GM12878 (cell line): ENCODE measurements at regions of chr17 and their contacts with region 1.

Region 1: GRCh38 chr17:58382108-58382871 is 30.3 kb upstream of the SUPT4H1 start:
- DNase-seq: peak; percentile 44
- ATAC-seq: peak; percentile 90
- H3K4me3 ChIP-seq: no peak overlapping the region; the same call in 1 of the 2 replicates
- H3K27ac ChIP-seq: peak overlapping the region; percentile 42; the same call in 1 of the 2 replicates
- H3K4me1 ChIP-seq: peaks cover 19% of the 10 kb centered on the region
- H3K27me3 ChIP-seq: no peaks in the 10 kb centered on the region
- CTCF ChIP-seq: no peak
- EP300 ChIP-seq: no peak
- POLR2A ChIP-seq: no peak
- RAD21 ChIP-seq: no peak

Region 2: GRCh38 chr17:58289869-58290268 is 92.4 kb before region 1 on chr17:
- CTCF ChIA-PET with region 1: no interaction called
- POLR2A ChIA-PET with region 1: no interaction called
- RAD21 ChIA-PET with region 1: no interaction called
- SMC1A ChIA-PET with region 1: no interaction called
- in situ Hi-C with region 1: no loop called
- intact Hi-C with region 1: no loop called
- DNase-seq: no peak
- ATAC-seq: no peak
- H3K4me3 ChIP-seq: no peak overlapping the region
- H3K27ac ChIP-seq: no peak overlapping the region
- H3K4me1 ChIP-seq: no peaks in the 10 kb centered on the region
- H3K27me3 ChIP-seq: no peaks in the 10 kb centered on the region
- CTCF ChIP-seq: no peak
- EP300 ChIP-seq: no peak
- POLR2A ChIP-seq: no peak
- RAD21 ChIP-seq: no peak

Region 3: DNA sequence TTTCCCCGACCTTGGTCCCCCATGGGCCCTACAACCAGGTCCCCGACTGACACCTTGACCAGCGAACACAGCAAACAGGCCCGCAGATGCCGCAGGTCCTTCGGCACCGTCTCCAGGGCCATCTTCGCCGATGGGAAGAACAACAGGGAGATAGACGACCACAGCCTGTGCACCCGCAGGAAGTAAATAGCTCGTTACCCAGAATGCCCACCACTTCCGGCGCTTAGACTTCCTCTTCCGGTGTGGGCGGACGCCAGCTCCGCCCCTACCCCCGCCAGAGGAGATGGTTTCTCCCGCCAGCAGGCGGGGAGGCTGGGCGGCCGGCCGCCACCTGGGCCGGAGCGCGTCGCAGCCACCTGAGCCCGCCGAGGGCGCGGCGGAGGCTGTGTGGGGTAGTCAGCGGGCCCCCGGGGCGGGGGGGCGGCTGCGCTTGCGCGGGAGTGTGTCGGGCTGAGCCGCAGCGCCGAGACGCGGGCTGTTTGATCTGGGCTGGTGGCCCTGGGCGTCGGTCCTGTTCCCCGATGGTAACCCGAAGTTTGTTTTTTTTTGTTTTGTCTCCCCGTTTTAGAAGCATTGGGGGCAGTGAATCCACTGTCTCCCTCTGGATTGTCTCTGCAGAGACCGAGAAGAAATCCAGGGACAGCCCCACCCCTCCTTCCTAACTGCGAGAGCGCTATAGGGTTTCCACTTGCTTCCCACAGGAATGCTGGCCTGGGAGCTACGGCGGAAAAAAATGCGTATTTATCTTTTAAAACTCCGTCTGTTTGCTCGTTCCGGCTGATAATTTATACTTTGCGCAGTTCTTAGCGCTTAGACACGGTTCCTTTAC is 30.1 kb before region 1 on chr17 and contains the start of gene SUPT4H1:
- CTCF ChIA-PET with region 1: interaction called, 6 read pairs
- POLR2A ChIA-PET with region 1: interaction called, 29 read pairs
- RAD21 ChIA-PET with region 1: interaction called, 4 read pairs
- SMC1A ChIA-PET with region 1: interaction called, 6 read pairs
- in situ Hi-C with region 1: no loop called
- intact Hi-C with region 1: no loop called
- DNase-seq: peak; percentile 73
- ATAC-seq: peak; percentile 96
- H3K4me3 ChIP-seq: peak within 1 kb of the TSS; percentile 94
- H3K27ac ChIP-seq: peak within 1 kb of the TSS; percentile 93
- H3K4me1 ChIP-seq: peaks cover 10% of the 10 kb centered on the region
- H3K27me3 ChIP-seq: no peaks in the 10 kb centered on the region
- CTCF ChIP-seq: no peak; a peak in 1 of 6 replicates
- EP300 ChIP-seq: peak in 1 of 2 experiments; percentile 43; a peak in 2 of 4 replicates
- POLR2A ChIP-seq: peak; percentile 91
- RAD21 ChIP-seq: peak; percentile 35; the same call in 1 of the 2 replicates
- polyA plus RNA-seq, gene SUPT4H1: 148 to 293 TPM

Region 4: DNA sequence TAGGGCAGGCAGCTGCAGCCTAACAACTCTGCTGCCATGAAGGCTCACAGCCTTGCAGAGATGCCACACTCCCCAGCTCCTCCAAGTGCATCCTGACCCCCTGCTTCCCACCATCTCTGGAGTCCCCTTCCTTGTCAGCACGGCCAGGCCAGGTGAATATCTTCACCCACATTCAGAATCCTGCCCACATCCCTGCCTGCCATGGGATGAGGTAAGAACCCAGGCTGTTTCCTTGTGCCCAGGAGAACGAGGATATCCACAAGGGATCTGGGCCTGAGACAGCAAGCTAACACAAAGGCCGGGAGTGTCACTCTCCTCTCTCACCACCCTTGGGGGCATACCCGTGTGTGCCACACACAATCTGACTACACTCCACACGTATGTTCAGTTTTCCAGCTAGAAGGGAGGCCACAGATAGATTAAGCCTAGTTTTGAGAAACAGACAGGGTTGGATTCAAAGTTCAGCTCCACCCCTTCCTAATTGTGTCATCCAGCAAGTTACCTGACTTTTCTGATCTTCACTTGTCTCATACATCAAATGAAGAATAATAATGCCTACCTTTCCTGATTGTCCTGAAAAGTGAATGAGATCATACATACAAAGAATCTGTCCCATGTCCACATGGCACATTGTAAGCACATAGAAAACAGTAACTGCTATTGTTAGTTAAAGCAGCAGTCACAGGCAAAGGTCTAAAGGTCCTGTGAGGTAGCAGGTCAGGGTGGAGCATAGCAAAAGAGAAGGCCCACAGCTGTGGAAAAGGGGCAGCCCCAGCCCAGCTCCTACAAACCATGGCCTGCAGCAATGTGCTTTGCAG is 12.9 kb before region 1 on chr17:
- CTCF ChIA-PET with region 1: interaction called, 3 read pairs
- POLR2A ChIA-PET with region 1: interaction called, 3 read pairs
- RAD21 ChIA-PET with region 1: interaction called, 4 read pairs
- SMC1A ChIA-PET with region 1: interaction called, 22 read pairs
- in situ Hi-C with region 1: no loop called
- intact Hi-C with region 1: no loop called
- DNase-seq: no peak
- ATAC-seq: no peak
- H3K4me3 ChIP-seq: no peak overlapping the region
- H3K27ac ChIP-seq: no peak overlapping the region
- H3K4me1 ChIP-seq: no peaks in the 10 kb centered on the region
- H3K27me3 ChIP-seq: no peaks in the 10 kb centered on the region
- CTCF ChIP-seq: no peak
- EP300 ChIP-seq: no peak
- POLR2A ChIP-seq: no peak
- RAD21 ChIP-seq: no peak

Region 5: GRCh38 chr17:58394534-58395223 is 12.4 kb after region 1 on chr17:
- CTCF ChIA-PET with region 1: interaction called, 7 read pairs
- POLR2A ChIA-PET with region 1: interaction called, 5 read pairs
- RAD21 ChIA-PET with region 1: no interaction called
- SMC1A ChIA-PET with region 1: interaction called, 30 read pairs
- in situ Hi-C with region 1: no loop called
- intact Hi-C with region 1: no loop called
- DNase-seq: no peak
- ATAC-seq: no peak
- H3K4me3 ChIP-seq: no peak overlapping the region
- H3K27ac ChIP-seq: no peak overlapping the region
- H3K4me1 ChIP-seq: no peaks in the 10 kb centered on the region
- H3K27me3 ChIP-seq: no peaks in the 10 kb centered on the region
- CTCF ChIP-seq: no peak
- EP300 ChIP-seq: no peak
- POLR2A ChIP-seq: no peak
- RAD21 ChIP-seq: no peak